ENCODE measurements at regions of chr19 and their contacts with region 1.

Region 1: GRCh38 chr19:6632002-6632621 is 37.8 kb downstream of the TNFSF14 start:
- DNase-seq: peak in 1 of 3 donors; percentile 24
- ATAC-seq: peak in 1 of 2 donors; percentile 37
- H3K4me3 ChIP-seq: no peak overlapping the region
- H3K27ac ChIP-seq: no peak overlapping the region
- H3K4me1 ChIP-seq: no peaks in the 10 kb centered on the region
- H3K27me3 ChIP-seq: no peaks in the 10 kb centered on the region

Region 2: DNA sequence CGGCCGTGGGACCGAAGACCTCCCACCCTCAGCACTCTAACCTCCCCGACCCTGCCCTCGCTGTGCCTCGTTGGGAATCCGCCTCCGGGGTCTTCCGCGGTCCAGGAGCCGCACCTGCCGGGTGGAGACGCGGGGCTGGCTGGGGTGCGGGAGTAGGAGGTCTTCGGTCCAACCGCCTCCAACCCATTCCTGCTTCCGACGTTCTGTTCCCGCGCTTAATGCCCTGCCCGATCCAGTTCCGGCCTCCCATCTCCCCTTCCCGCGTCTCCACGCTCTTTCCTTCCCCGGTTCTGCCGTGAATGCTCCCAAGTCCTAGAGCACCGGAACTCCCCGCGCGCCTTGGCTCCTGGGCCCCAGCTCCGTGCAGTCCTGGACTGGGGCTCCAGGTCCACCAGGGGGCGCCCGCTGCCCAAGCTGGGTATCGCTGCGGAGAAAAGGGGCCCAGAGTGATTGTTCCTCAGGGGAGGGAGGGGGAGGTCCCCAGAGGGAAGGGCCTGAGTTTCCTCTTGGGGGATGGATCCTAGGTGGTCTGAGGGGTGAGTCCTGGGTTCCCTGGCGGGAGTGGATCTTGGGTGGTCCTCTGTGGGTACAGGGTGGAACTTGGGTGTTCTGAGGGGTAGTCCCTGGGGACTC is 115.3 kb before region 1 on chr19:
- intact Hi-C with region 1: loop called in 2 of 4 experiments (anchors 5 kb)
- DNase-seq: peak; percentile 93 to 97 (median 96)
- ATAC-seq: peak; percentile 92 to 93
- H3K4me3 ChIP-seq: peak overlapping the region; percentile 35
- H3K27ac ChIP-seq: no peak overlapping the region
- H3K4me1 ChIP-seq: no peaks in the 10 kb centered on the region
- H3K27me3 ChIP-seq: no peaks in the 10 kb centered on the region

Region 3: DNA sequence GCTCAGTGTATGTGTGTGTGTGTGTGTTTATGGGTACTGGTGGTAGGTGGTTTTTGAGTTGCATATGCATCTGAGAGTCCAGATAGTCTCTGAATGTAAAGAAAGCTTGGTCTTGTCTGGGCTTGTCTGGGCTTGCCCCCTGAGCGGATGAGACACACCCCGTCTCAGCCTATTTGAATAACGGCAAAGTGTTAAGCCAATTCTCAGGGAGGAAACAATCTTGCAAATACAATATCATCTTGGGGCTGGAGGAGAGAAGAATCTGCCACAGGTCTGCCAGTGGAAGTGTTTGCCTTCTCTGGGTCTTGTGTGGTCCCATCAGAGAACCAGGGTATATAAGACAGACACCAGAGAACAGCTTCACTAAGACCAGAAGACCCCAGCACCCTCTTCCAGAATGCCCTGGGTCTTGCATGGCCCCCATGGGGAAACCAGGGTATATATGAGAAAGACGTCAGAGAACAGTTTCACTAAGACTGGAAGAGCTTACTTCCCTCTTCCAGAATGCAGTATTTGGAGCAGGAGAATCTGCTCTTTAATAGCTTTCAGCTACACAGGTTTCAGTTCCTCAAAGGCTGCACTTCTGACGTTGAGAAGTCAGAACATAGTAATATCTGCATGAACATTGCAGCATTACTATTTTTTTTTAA is 54.5 kb before region 1 on chr19:
- intact Hi-C with region 1: no loop called
- DNase-seq: no peak
- ATAC-seq: no peak
- H3K4me3 ChIP-seq: no peak overlapping the region
- H3K27ac ChIP-seq: no peak overlapping the region
- H3K4me1 ChIP-seq: no peaks in the 10 kb centered on the region
- H3K27me3 ChIP-seq: no peaks in the 10 kb centered on the region

Measured in right cardiac atrium (tissue), 5 donors.